ENCODE measurements at regions of chr11 and their contacts with region 1.

Region 1: GRCh38 chr11:35237860-35238715 is 99.1 kb downstream of the CD44 start:
- DNase-seq: no peak
- ATAC-seq: peak; percentile 51
- H3K4me3 Mint-ChIP-seq: no peak overlapping the region
- H3K27ac Mint-ChIP-seq: no peak overlapping the region
- H3K4me1 Mint-ChIP-seq: peaks cover 30% of the 10 kb centered on the region
- H3K27me3 Mint-ChIP-seq: no peaks in the 10 kb centered on the region
- CTCF ChIP-seq: no peak

Region 2: DNA sequence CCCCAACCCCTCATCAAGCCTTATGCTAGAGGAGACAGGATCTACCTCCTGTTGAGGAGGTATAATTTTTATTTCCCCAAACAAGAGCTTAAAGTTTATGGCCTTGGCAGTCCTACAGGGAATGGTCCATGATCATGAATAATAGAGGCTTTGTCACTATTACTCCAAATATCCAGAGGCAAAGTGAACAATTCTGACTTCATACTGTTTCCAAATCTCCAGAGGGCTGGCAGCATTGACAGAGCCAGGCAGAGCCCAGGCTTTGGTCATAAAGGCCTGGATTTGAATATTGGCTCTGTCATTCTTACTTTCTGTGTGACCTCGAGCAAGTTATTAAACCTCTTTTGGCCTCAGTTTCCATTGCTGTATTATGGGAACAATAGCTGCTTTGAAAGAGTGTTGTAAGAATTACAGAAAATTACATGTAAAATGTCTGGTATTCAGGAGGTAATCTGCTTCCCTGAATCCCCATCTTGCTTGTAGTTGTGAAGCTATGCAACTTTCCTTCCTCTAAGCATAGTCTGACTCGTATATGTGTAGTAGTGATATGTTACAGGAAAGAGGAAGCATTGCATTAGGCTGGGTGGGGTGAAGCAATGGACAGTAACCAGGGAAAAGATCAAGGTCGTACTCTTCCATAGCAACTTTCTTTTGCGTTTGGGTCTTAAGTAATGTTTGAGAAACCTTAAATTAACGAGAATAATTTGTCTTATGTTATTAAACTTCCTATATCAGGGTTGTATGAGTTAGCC is 10.3 kb before region 1 on chr11:
- CTCF ChIA-PET with region 1: interaction called, 3 read pairs
- POLR2A ChIA-PET with region 1: interaction called, 11 read pairs
- intact Hi-C with region 1: no loop called
- DNase-seq: no peak
- ATAC-seq: no peak
- H3K4me3 Mint-ChIP-seq: no peak overlapping the region
- H3K27ac Mint-ChIP-seq: peak overlapping the region; percentile 19
- H3K4me1 Mint-ChIP-seq: peaks cover 14% of the 10 kb centered on the region
- H3K27me3 Mint-ChIP-seq: no peaks in the 10 kb centered on the region
- CTCF ChIP-seq: no peak

Measured in activated B cell treated with CpG ODN at 0.5 μM for 24 hours (primary cell).